Left cardiac atrium (tissue), 4 donors: ENCODE measurements at regions of chr1 and their contacts with region 1.

Region 1: GRCh38 chr1:26161415-26162219 is 2.7 kb downstream of the FAM110D start:
- DNase-seq: peak; percentile 80
- ATAC-seq: peak; percentile 65 to 66

Region 2: GRCh38 chr1:25819576-25820246 is 341.9 kb before region 1 on chr1 and contains the start of gene MTFR1L:
- intact Hi-C with region 1: no loop called
- DNase-seq: peak; percentile 91
- ATAC-seq: peak; percentile 94
- total RNA-seq, gene MTFR1L: 126 to 139 TPM

Region 3: DNA sequence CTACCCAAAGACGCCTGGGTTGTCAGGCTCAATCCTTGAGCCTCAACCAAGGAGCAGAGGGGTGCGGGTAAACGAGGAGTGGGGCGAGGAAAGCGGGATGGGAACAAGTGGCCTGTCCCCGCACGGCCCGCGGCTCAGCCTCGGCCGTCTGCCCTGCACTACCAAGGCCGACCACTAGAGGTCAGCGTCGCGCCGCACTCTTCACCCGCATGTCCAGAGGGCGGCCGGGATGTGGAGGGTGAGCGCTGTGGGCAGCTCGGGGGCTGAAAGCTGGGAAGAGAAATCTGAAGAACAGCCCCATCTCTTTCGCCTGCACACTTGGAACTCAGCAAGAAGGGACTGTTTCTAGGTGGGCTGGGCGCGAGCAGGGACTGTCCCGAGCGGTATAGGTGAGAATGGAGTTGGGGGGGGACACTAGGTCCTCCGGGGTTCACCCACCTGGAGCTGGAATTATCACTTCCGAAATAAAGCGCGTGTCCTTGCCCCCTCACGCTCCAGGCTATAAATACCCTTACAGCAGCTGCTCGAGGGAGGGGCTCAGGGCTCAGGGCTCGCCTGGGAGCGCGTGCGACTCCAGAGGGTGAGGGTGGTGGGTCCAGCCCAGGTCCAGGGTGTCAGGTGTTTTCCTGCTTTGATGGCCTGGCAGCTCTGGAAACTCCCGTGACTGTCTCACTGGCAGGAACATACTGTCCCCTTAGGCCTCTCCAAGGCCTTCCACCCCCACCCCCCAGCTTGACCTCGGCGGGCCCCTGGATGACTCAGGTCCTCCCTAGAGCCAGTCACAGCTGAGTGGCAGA is 125.5 kb before region 1 on chr1:
- intact Hi-C with region 1: loop called in 1 of 2 experiments (anchors 1 kb)
- DNase-seq: peak; percentile 87
- ATAC-seq: peak; percentile 91 to 92

Region 4: GRCh38 chr1:26066857-26067256 is 94.8 kb before region 1 on chr1:
- intact Hi-C with region 1: no loop called
- DNase-seq: peak; percentile 67
- ATAC-seq: peak; percentile 90 to 95